ENCODE measurements at regions of chr11 and their contacts with region 1.

Region 1: GRCh38 chr11:105862736-105863367 is 159.2 kb downstream of the MSANTD4 start:
- DNase-seq: no peak
- ATAC-seq: peak in 1 of 4 donors; percentile 67
- H3K4me3 ChIP-seq: no peak overlapping the region
- H3K27ac ChIP-seq: no peak overlapping the region
- H3K4me1 ChIP-seq: no peaks in the 10 kb centered on the region
- H3K27me3 ChIP-seq: no peaks in the 10 kb centered on the region
- CTCF ChIP-seq: peak; percentile 60

Region 2: DNA sequence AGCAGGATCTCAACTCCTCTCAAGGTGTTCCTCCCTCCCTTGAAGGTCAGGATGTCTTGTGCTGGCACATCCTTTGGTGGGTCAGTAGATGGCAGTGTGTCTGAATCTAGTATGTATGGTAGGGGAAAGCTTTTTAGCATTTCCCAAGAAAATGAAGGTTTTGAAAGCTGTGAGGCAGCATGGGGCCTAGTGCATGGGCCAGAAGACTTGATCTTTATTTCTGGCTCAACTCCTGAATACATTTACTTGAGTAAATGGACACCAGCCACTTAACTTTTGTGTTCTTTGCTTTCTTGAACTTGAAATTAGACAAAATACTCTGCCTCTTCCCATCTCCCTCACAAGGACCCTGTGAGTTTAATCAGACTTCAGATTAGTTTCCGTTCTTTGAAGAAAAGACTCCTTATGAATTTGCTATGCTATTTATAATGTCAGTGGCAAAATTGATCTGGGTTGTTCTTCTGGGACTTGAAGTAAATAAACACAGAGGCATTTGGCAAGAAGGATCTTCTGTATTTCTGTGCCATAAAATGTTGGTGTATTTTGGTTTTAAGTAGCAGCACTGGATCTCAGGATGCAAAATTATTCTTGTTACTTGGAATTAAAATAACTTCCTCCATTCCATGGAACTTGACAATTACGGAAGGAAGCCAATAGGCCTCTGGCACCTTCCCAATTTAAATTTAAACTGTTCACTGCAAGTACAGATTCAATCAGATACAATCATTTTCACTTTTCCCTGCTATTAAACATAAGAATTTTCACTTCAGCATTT is 1253.4 kb before region 1 on chr11:
- intact Hi-C with region 1: loop called in 1 of 2 experiments (anchors 5 kb)
- DNase-seq: no peak
- ATAC-seq: peak in 1 of 4 donors; percentile 58
- H3K4me3 ChIP-seq: no peak overlapping the region
- H3K27ac ChIP-seq: no peak overlapping the region
- H3K4me1 ChIP-seq: peaks cover 5% of the 10 kb centered on the region
- H3K27me3 ChIP-seq: no peaks in the 10 kb centered on the region
- CTCF ChIP-seq: peak; percentile 45

Region 3: GRCh38 chr11:105005446-105005845 is 857.4 kb before region 1 on chr11:
- intact Hi-C with region 1: loop called in 1 of 2 experiments (anchors 5 kb)
- DNase-seq: no peak
- ATAC-seq: no peak
- H3K4me3 ChIP-seq: no peak overlapping the region
- H3K27ac ChIP-seq: no peak overlapping the region
- H3K4me1 ChIP-seq: no peaks in the 10 kb centered on the region
- H3K27me3 ChIP-seq: no peaks in the 10 kb centered on the region
- CTCF ChIP-seq: no peak

Region 4: DNA sequence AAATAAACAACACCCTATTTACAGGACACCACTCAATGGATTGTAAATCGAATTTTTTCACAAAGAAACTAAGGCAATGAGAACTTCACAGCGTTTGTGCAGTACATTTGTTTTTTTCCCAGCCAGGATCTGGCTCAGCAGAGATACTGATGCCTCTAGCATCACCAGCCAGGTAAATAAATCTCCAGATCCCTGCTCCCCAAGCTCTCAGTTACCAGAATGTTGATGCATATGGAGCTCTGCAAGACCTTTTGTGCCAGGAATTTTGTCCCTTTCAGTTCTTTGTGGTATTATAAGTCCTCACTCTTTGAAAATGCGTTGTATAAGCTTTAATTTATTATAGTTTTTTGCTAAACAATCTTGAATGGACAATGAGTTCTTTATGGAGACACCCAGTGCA is 21.6 kb after region 1 on chr11:
- intact Hi-C with region 1: no loop called
- DNase-seq: no peak
- ATAC-seq: no peak
- H3K4me3 ChIP-seq: no peak overlapping the region
- H3K27ac ChIP-seq: no peak overlapping the region
- H3K4me1 ChIP-seq: no peaks in the 10 kb centered on the region
- H3K27me3 ChIP-seq: no peaks in the 10 kb centered on the region
- CTCF ChIP-seq: no peak

Measured in psoas muscle (tissue), 8 donors.